Activated naive CD4-positive, alpha-beta T cell treated with anti-CD3 and anti-CD28 coated beads for 36 hours (primary cell): ENCODE measurements at regions of chr3 and their contacts with region 1.

Region 1: DNA sequence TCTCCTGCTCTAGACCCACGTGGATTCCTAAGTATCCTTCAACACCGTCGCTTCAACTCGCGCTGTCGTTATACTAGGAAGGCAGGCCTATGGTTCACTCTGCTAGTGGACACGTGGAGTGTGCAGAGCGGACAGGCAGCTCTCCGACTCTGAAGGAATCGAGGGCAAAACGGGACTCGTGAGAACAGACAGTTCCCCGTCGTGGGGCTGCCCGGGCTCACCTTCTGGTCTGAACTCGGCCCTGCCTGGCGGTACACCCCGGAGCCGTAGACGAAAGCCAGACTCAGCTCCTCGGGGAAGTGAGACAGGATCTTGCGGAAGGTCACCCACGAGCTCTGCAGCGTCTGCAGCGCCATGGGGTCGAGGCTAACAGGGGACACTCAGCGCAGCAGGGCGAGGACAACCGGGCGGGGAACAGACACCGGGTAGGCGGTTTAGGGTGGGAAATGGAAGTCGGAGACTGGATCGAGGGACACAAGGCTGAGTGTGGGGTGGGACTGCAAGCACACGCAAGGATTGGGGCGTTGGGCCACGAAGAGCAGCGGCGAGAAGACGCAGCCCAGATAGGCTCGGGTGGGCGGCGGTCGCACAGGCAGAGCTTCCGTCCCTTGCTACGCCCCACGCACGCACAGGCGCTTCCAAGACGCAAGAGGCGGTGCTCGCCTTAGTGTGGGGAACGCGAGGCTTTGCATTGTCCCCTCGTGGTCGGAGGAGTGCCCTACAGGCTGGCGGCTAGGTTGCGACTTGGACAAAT is at the start of gene TAMM41:
- DNase-seq: peak; percentile 95
- H3K4me3 Mint-ChIP-seq: peak within 1 kb of the TSS; percentile 97
- H3K27ac Mint-ChIP-seq: peak within 1 kb of the TSS; percentile 80
- H3K4me1 Mint-ChIP-seq: peaks cover 26% of the 10 kb centered on the region
- H3K27me3 Mint-ChIP-seq: no peaks in the 10 kb centered on the region
- total RNA-seq, gene TAMM41: 19.3 to 21.4 TPM

Region 2: DNA sequence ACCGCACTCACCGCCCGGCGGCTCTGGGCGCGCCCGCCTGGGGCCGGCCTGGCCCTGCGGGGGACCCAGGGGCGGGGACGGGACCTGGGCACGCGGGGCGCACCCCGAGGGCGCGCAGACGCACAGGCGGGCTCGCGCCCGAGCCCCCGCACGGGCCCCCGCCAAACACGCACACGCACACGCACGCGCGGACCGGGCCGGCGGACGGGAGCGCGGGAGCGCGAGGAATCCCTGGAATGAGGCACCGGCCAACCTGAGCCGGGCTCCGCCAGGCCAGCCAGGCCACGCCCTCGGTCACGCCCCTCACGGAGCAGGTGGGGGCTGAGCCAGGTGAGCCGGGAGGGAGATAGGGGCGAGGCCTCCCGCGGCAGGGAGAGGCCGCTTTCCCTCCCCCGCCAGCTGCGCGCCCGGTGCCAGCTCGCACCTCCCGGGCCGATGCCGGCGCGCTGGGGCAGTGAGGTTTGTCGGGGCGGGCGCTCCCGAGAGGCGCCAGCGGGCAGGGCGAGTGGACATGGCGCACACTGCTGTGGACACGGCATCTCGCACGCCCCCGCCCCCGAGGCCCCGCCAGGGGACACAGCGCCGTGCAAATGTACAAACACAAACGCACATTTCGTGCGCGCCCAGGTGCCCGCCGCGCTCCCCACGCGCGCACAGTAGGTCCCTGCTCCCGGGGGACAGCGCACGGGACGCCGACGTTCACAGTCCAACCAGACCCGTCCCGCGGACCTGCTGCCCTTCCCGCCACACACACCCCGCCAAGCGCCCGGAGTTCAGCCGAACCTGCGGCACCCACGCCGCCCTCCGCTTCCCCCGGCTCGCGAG is 126.8 kb before region 1 on chr3:
- CTCF ChIA-PET with region 1: no interaction called
- intact Hi-C with region 1: loop called (anchors 2 kb)
- DNase-seq: peak; percentile 73
- H3K4me3 Mint-ChIP-seq: peak overlapping the region; percentile 88
- H3K27ac Mint-ChIP-seq: no peak overlapping the region
- H3K4me1 Mint-ChIP-seq: peaks cover 17% of the 10 kb centered on the region
- H3K27me3 Mint-ChIP-seq: peaks cover 5% of the 10 kb centered on the region

Region 3: GRCh38 chr3:11770477-11771391 is 75.7 kb before region 1 on chr3:
- CTCF ChIA-PET with region 1: no interaction called
- intact Hi-C with region 1: loop called (anchors 1 kb)
- DNase-seq: peak; percentile 91
- H3K4me3 Mint-ChIP-seq: peak overlapping the region; percentile 10
- H3K27ac Mint-ChIP-seq: peak overlapping the region; percentile 71
- H3K4me1 Mint-ChIP-seq: peaks cover 18% of the 10 kb centered on the region
- H3K27me3 Mint-ChIP-seq: no peaks in the 10 kb centered on the region

Region 4: GRCh38 chr3:11835028-11835639 is 11.3 kb before region 1 on chr3:
- CTCF ChIA-PET with region 1: interaction called, 10 read pairs
- intact Hi-C with region 1: no loop called
- DNase-seq: no peak
- H3K4me3 Mint-ChIP-seq: no peak overlapping the region
- H3K27ac Mint-ChIP-seq: no peak overlapping the region
- H3K4me1 Mint-ChIP-seq: no peaks in the 10 kb centered on the region
- H3K27me3 Mint-ChIP-seq: no peaks in the 10 kb centered on the region

Region 5: GRCh38 chr3:12556671-12557472 is 710.4 kb after region 1 on chr3 and contains the start of gene MKRN2:
- CTCF ChIA-PET with region 1: no interaction called
- intact Hi-C with region 1: loop called (anchors 10 kb)
- DNase-seq: peak; percentile 83
- H3K4me3 Mint-ChIP-seq: peak within 1 kb of the TSS; percentile 78
- H3K27ac Mint-ChIP-seq: peak within 1 kb of the TSS; percentile 88
- H3K4me1 Mint-ChIP-seq: peaks cover 48% of the 10 kb centered on the region
- H3K27me3 Mint-ChIP-seq: peaks cover 24% of the 10 kb centered on the region
- total RNA-seq, gene MKRN2: 32.9 to 34.5 TPM